ENCODE measurements at regions of chr1 and their contacts with region 1.

Region 1: DNA sequence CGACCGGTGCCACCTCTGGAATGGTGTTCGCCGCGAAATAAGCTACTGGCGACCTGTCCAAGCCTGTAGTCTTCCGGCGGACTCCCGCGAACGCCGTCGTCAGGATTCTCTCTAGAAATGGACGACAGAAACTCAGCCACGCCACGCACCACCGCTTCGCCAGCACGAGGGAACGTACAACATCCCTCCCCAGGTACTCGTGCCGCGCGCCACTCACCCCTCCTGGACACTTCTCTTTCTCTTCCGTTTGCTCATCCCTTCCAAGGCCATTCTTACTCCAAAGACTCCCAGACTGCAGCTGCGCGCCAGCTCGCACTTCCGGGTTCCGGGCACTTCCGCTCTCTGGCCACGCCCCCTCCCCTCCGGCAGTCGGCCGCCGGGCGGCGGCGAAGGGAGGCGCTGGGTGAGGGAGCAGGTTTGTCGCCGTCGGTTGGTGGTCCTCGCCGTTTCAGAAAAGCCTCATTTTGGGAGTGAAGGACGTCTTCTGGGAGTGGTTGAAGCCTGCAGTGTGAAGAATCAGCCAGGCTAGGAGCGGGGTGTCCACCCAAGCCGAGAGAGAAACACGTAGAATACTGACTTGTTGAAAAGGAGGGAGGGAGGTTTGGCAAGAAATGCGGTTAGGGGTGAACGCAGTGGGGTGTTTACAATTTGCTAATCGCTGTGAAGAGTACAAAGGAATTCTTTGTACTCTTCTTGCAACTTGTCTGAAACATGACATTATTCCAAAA is at the start of gene RBM34:
- DNase-seq: peak; percentile 86
- ATAC-seq: peak; percentile 84
- H3K4me3 ChIP-seq: peak within 1 kb of the TSS; percentile 91
- H3K27ac ChIP-seq: peak within 1 kb of the TSS; percentile 82
- H3K4me1 ChIP-seq: peaks cover 21% of the 10 kb centered on the region
- H3K27me3 ChIP-seq: no peaks in the 10 kb centered on the region
- CTCF ChIP-seq: no peak
- total RNA-seq, gene RBM34: 40.1 and 44.9 TPM in 2 replicates

Region 2: GRCh38 chr1:235105051-235106043 is 55.8 kb before region 1 on chr1:
- CTCF ChIA-PET with region 1: no interaction called
- POLR2A ChIA-PET with region 1: no interaction called
- intact Hi-C with region 1: loop called (anchors 10 kb)
- DNase-seq: no peak
- ATAC-seq: peak; percentile 31
- H3K4me3 ChIP-seq: peak overlapping the region; percentile 61
- H3K27ac ChIP-seq: 0 out of 2 replicates have a peak overlapping the region, but pooled peaks have one; percentile 13
- H3K4me1 ChIP-seq: peaks cover 11% of the 10 kb centered on the region
- H3K27me3 ChIP-seq: no peaks in the 10 kb centered on the region
- CTCF ChIP-seq: no peak

Measured in PC-3 (cell line).